ENCODE measurements at regions of chr6 and their contacts with region 1.

Region 1: DNA sequence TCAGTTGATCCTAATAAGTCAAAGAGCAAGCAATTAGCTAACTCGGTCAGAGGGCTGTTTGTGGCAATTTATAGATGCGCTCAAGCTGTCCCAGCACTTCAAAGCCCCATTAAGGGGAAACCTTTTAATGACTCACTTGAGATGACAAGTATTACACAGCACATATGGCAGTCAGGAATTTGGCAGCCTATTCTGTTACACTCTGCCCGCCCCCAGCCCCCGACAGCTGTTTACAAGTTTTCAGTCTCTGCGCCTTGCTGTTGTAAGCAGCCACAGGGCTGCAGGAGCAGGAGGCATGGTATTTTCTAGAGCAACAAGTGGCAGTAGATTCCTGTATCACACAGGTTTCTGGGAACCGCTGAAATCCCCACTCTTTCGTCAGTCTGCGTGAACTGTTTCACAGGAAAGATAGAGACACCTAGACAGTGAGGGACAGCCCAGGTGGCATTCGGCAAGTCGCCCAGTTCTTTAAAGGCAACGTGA is 263.0 kb downstream of the FOXC1 start:
- DNase-seq: peak in 2 of 10 donors; percentile 14 to 55
- H3K4me3 ChIP-seq: peak overlapping the region in 4 of 59 donors; percentile 2 to 45 (median 13)
- H3K27ac ChIP-seq: peak overlapping the region in 29 of 59 donors; percentile 8 to 81 (median 57)
- H3K27me3 ChIP-seq: no peaks in the 10 kb centered on the region
- CTCF ChIP-seq: no peak

Region 2: GRCh38 chr6:1856381-1856780 is 16.3 kb before region 1 on chr6:
- intact Hi-C with region 1: no loop called
- DNase-seq: peak in 1 of 10 donors; percentile 44
- H3K4me3 ChIP-seq: peak overlapping the region in 9 of 59 donors; percentile 9 to 31 (median 17)
- H3K27ac ChIP-seq: no peak overlapping the region
- H3K27me3 ChIP-seq: no peaks in the 10 kb centered on the region
- CTCF ChIP-seq: peak in 3 of 56 donors; percentile 3 to 8 (median 8)

Region 3: GRCh38 chr6:1917626-1918371 is 45.1 kb after region 1 on chr6:
- intact Hi-C with region 1: loop called in 1 of 2 experiments (anchors 5 kb)
- DNase-seq: peak in 4 of 10 donors; percentile 55 to 79 (median 58)
- H3K4me3 ChIP-seq: no peak overlapping the region
- H3K27ac ChIP-seq: peak overlapping the region in 22 of 59 donors; percentile 6 to 77 (median 48)
- H3K27me3 ChIP-seq: no peaks in the 10 kb centered on the region
- CTCF ChIP-seq: no peak

Measured in dorsolateral prefrontal cortex (tissue), 120 donors.